Heart left ventricle (tissue), 16 donors: ENCODE measurements at regions of chr10 and their contacts with region 1.

Region 1: DNA sequence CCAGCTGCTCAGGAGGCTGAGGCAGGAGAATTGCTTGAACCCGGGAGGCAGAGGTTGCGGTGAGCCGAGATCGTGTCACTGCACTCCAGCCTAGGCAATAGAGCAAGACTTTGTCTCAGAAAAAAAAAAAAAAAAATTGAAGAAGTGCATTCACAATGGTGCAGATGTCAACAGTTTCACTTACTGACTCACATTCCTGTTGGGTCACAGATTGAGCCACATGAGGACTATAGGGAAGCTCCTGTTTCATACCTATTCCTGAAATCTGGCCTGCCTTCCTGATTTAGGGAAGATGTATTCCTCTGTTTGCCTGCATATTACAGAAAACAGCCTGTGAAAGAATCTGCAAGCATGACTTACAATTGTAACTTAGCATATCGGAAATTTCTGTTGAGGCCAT is 78.2 kb downstream of the AKR1C4 start:
- DNase-seq: no peak
- ATAC-seq: no peak
- H3K4me3 ChIP-seq: no peak overlapping the region
- H3K27ac ChIP-seq: peak overlapping the region in 1 of 12 donors; percentile 23
- H3K4me1 ChIP-seq: peaks cover 0 to 5% (median 0%) of the 10 kb centered on the region in 12 donors
- H3K27me3 ChIP-seq: no peaks in the 10 kb centered on the region
- CTCF ChIP-seq: no peak
- POLR2A ChIP-seq: no peak

Region 2: DNA sequence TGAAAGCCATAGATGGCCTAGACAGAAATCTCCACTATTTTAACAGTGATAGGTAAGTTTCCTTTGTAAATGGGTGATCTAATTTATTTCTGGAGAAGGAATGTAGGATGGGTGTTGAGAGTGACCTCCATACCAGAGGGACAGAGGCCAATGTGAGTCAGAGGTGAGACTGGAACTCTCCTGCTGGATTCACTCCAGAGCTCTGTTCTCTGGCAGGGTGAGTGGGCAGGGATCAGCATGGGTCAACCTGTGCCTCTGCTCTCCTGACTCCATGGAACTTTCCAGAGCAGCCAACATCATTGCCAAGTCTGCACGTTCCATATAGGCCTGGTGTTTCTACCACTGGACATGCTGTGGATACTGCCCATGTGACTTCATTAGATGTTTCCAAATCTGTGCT is 169.2 kb before region 1 on chr10:
- intact Hi-C with region 1: loop called in 1 of 10 experiments (anchors 10 kb)
- DNase-seq: no peak
- ATAC-seq: no peak
- H3K4me3 ChIP-seq: no peak overlapping the region
- H3K27ac ChIP-seq: no peak overlapping the region
- H3K4me1 ChIP-seq: no peaks in the 10 kb centered on the region
- H3K27me3 ChIP-seq: no peaks in the 10 kb centered on the region
- CTCF ChIP-seq: no peak
- POLR2A ChIP-seq: no peak

Region 3: DNA sequence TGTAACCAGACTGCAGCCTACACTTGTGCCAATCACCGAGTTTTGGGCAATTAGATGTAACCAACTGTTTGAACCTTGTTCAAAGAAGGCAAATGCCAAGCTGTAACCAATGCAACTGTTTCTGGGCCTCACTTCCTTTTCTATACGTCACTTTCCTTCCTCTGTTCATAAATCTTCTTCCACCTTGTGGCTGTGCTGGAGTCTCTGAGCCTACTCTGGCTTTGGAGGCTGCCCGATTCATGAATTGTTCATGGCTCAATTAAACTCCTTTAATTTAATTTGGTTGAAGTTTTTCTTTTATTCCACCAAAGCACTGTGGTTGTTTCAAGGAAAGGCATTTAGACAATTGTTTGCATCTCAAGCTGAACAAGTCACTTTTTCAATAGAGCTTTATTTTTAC is 46.5 kb after region 1 on chr10:
- intact Hi-C with region 1: loop called in 1 of 10 experiments (anchors 2 kb)
- DNase-seq: no peak
- ATAC-seq: no peak
- H3K4me3 ChIP-seq: no peak overlapping the region
- H3K27ac ChIP-seq: no peak overlapping the region
- H3K4me1 ChIP-seq: peaks cover 0 to 10% (median 0%) of the 10 kb centered on the region in 12 donors
- H3K27me3 ChIP-seq: no peaks in the 10 kb centered on the region
- CTCF ChIP-seq: no peak
- POLR2A ChIP-seq: no peak